AG04450 (cell line): ENCODE measurements at regions of chr1 and their contacts with region 1.

Region 1: GRCh38 chr1:40508375-40509341 is at the start of gene EXO5:
- DNase-seq: no peak
- H3K4me3 ChIP-seq: peak within 1 kb of the TSS; percentile 82
- H3K27ac ChIP-seq: peak within 1 kb of the TSS; percentile 75
- H3K27me3 ChIP-seq: no peaks in the 10 kb centered on the region
- CTCF ChIP-seq: no peak
- polyA plus RNA-seq, gene EXO5: 8.3 and 11.1 TPM in 2 replicates

Region 2: GRCh38 chr1:40167317-40167716 is 341.3 kb before region 1 on chr1:
- CTCF ChIA-PET with region 1: no interaction called
- POLR2A ChIA-PET with region 1: interaction called, 10 read pairs
- DNase-seq: no peak
- H3K4me3 ChIP-seq: no peak overlapping the region
- H3K27ac ChIP-seq: no peak overlapping the region
- H3K27me3 ChIP-seq: no peaks in the 10 kb centered on the region
- CTCF ChIP-seq: no peak

Region 3: GRCh38 chr1:40299366-40300248 is 209.1 kb before region 1 on chr1:
- CTCF ChIA-PET with region 1: no interaction called
- POLR2A ChIA-PET with region 1: no interaction called
- DNase-seq: no peak
- H3K4me3 ChIP-seq: no peak overlapping the region
- H3K27ac ChIP-seq: no peak overlapping the region
- H3K27me3 ChIP-seq: peaks cover 3% of the 10 kb centered on the region
- CTCF ChIP-seq: no peak

Region 4: DNA sequence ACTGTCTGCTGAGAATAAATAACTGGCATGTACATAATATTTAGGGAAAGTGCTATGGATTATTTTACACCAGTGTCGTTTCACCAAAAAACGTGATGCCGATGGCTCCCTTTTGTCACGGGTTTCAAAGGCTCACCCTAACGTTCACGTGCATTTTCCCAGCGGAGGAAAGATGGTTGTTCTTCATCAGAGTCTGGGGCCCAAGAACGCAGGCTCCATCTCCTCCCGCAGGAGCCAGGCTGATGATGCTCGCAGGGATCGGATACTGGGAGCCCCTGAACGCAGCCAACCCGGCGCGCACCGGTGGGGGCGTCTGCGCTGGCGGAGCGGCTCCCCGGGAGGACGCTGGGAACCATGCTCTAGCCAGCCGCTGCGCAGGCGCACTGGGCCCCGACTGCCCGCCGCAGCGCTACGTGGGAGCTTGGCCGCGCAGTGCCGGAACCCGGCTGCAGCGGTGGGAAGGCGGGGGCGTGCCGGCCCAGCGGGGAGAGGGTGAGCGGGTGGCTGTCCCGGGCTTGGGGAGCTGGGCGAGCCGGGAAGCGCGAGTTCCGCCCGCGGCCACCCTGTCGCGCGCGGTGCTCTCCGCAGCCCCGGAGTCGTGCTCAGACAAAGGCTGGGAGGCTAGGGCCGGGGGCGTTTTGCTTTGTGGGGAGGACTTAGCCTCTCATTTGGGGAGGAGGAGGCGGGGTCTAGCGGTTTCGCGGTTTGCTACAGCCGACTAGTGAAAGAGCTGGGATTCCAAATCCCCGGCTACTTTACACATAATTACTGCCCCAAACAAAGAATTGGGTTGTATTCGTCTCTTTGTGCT is 58.8 kb before region 1 on chr1 and contains the start of gene ZFP69B:
- CTCF ChIA-PET with region 1: no interaction called
- POLR2A ChIA-PET with region 1: interaction called, 12 read pairs
- DNase-seq: peak; percentile 76
- H3K4me3 ChIP-seq: peak within 1 kb of the TSS; percentile 80
- H3K27ac ChIP-seq: peak within 1 kb of the TSS; percentile 92
- H3K27me3 ChIP-seq: no peaks in the 10 kb centered on the region
- CTCF ChIP-seq: no peak
- polyA plus RNA-seq, gene ZFP69B: 4.4 and 5.9 TPM in 2 replicates

Region 5: DNA sequence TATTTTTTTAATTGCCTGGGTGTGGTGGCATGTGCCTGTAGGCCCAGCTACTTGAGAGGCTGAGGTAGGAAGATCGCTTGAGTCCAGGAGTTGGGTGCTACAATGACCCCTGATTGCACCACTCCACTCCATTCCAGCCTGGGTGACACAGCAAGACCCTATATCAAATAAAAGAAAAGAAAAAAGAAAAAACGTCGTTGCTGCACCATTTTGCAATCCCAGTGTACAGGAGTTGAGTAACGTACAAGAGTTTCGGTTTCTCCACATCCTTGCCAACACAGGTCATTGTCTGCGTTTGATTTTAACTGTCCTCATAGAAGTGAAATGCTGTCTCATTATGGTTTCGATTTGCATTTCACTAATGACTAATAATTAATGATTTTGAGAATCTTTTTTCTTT is 30.7 kb after region 1 on chr1:
- CTCF ChIA-PET with region 1: no interaction called
- POLR2A ChIA-PET with region 1: no interaction called
- DNase-seq: no peak
- H3K4me3 ChIP-seq: no peak overlapping the region
- H3K27ac ChIP-seq: no peak overlapping the region
- H3K27me3 ChIP-seq: no peaks in the 10 kb centered on the region
- CTCF ChIP-seq: no peak